ENCODE measurements at regions of chr21 and their contacts with region 1.

Region 1: GRCh38 chr21:26842976-26843932 is 2.0 kb downstream of the ADAMTS1 start:
- DNase-seq: peak; percentile 93
- ATAC-seq: peak; percentile 51 to 62

Region 2: GRCh38 chr21:26756491-26757159 is 86.6 kb before region 1 on chr21:
- intact Hi-C with region 1: no loop called
- DNase-seq: no peak
- ATAC-seq: no peak

Region 3: GRCh38 chr21:26769613-26770188 is 73.6 kb before region 1 on chr21:
- intact Hi-C with region 1: loop called in 1 of 2 experiments (anchors 2 kb)
- DNase-seq: no peak
- ATAC-seq: no peak

Region 4: DNA sequence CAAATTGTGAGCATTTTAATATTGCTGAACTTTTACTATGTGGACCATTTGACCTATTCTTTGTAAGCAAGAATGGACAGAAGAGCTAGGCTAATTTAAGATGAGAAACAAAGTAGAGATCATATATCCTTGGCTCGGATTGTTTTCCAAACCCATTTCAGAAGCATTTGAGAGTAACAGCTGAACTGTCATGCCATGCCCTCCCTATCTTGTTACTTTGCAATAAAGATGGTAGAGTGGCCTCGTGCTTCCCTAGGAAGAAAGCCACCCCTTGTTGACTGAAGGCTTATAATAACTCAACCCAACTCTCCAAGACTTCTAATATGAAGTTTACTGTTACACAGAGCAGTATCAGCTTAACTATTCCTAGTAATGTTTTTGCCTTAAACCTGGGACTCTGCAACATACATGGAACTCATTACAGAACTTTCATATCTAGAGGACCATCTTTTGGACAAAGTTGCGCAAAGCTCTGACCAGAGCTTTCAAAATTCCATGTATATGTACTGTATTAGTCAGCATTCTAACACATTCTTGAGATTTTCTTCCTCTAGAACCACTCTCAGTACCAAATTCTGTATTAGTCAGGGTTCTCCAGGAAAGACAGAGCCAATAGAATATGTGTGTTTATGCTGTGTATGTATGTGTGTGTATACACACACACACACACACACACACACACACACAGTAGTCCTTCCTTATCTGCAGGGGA is 66.8 kb before region 1 on chr21:
- intact Hi-C with region 1: loop called (anchors 2 to 5 kb)
- DNase-seq: no peak
- ATAC-seq: no peak

Region 5: DNA sequence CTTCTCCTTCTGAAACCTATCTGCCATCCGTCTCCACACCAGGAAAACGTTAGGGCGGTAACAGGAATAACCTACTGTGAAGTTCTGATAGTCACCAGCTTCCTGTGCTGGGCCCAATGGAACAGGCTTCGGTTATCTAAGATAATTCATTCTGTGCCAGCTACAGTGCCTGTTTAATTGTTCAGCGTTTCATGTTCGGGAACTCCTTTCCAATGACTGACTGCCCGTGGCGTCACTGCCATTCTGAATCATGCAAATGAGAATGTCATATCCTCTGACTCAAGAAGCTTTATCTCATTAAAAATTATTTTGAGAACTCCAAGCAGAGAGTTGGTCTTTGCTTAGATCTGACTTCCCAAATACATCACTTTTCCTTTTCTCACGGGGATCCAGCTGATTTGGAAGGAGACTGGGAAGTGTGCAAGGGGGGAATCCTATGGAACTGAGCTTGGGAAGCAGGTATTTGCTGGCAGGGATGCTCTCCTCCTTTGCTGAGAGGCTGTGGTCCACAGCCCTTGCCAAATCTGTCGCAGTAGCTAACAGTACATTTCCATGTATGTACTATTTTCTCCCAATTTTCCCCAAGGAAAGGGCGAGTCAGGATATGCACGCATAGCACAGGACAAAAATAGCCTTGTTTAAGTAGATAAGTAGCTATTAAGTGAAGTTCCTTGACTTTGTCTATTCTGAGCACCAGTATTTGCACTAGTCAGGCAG is 1790.7 kb after region 1 on chr21:
- intact Hi-C with region 1: loop called in 1 of 2 experiments (anchors 5 kb)
- DNase-seq: peak; percentile 81
- ATAC-seq: peak; percentile 58 to 85